Heart left ventricle (tissue), 16 donors: ENCODE measurements at regions of chr20 and their contacts with region 1.

Region 1: DNA sequence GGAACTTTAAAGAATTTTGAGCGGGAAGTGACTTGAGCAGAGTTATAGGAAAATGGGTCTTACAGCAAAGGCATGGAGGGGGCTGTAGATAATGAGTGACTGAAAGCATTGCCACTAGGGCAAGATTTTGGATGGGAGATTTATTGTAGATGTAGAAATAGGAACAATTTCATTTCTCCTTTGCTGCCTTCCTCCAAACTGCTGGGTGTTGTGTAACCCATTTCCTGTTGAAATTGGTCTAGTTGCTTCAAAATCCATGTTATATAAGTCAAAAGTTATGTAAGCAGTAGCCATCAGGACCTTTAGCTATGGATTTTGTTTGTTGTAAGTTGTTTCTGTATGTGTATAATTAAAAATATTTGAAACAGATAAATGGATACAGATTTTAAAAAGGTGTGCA is 11.1 kb downstream of the YWHAB start:
- DNase-seq: no peak
- ATAC-seq: peak in 3 of 4 donors; percentile 18 to 44 (median 24)
- H3K4me3 ChIP-seq: peak overlapping the region in 2 of 12 donors; percentile 2 to 9
- H3K27ac ChIP-seq: peak overlapping the region in 6 of 12 donors; percentile 8 to 53 (median 28)
- H3K4me1 ChIP-seq: peaks cover 6 to 90% (median 50%) of the 10 kb centered on the region in 12 donors
- H3K27me3 ChIP-seq: no peaks in the 10 kb centered on the region
- CTCF ChIP-seq: no peak
- POLR2A ChIP-seq: no peak

Region 2: DNA sequence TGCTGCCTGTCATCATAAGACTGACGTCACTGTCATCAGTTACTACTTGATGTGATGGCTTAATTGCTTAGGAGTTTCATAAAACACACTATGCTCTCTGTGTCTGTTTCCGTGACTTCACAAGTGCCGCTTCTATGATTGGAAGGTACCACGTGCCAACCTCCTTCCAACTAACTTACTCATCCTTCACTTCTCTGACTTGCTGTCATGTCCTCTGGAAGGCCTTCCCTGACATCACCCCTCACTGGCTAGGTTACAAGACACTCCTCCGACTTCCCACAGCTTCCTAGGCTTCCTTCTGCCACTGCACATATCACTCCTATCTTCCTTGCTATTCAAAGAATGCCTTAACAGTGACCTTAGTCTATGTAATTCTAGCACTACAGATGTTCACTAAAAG is 395.1 kb before region 1 on chr20:
- intact Hi-C with region 1: loop called in 1 of 10 experiments (anchors 10 kb)
- DNase-seq: peak in 1 of 5 donors; percentile 62
- ATAC-seq: peak in 3 of 4 donors; percentile 48 to 84 (median 84)
- H3K4me3 ChIP-seq: no peak overlapping the region
- H3K27ac ChIP-seq: peak overlapping the region in 1 of 12 donors; percentile 69
- H3K4me1 ChIP-seq: peaks cover 0 to 18% (median 10%) of the 10 kb centered on the region in 12 donors
- H3K27me3 ChIP-seq: no peaks in the 10 kb centered on the region
- CTCF ChIP-seq: no peak
- POLR2A ChIP-seq: no peak